OCI-LY7 (cell line): ENCODE measurements at regions of chr10 and their contacts with region 1.

Region 1: GRCh38 chr10:63157845-63158624 is 24.9 kb downstream of the NRBF2 start:
- DNase-seq: peak; percentile 87
- H3K4me3 ChIP-seq: no peak overlapping the region
- H3K27ac ChIP-seq: no peak overlapping the region
- H3K4me1 ChIP-seq: no peaks in the 10 kb centered on the region
- CTCF ChIP-seq: peak; percentile 96

Region 2: DNA sequence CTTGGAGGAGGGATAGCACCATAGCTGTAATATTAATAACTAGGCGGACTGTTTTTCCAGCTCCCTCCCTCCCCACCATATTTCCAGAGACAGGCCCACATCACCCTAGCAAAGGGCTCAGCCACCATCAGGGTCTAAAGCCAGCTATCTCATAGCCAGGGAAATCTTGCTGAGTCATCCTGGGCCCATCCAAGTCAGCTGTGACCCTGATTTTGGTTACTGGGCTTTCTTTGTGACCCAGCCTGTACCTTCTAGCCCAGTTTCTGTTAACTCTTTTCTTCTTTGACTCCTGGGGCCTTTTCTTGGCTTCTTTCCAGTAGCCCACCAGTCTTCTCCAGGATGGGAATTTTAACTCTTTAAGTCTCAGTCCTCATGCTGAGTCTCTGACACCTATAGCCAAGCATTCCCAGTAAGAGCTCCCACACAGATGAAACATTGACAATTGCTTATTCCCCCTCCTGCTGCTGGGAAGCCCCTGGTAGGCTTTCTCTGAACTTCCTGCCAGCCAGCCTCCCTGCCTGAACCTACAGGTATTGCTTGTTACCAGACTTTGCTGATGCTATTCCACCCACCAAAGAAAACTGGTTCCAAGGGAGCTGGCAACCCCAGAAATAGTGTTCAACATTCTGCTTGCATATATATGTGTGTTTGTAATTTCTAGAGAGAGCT is 388.3 kb before region 1 on chr10:
- CTCF ChIA-PET with region 1: no interaction called
- POLR2A ChIA-PET with region 1: no interaction called
- intact Hi-C with region 1: no loop called
- DNase-seq: no peak
- H3K4me3 ChIP-seq: no peak overlapping the region
- H3K27ac ChIP-seq: no peak overlapping the region
- H3K4me1 ChIP-seq: peaks cover 16% of the 10 kb centered on the region
- CTCF ChIP-seq: no peak

Region 3: DNA sequence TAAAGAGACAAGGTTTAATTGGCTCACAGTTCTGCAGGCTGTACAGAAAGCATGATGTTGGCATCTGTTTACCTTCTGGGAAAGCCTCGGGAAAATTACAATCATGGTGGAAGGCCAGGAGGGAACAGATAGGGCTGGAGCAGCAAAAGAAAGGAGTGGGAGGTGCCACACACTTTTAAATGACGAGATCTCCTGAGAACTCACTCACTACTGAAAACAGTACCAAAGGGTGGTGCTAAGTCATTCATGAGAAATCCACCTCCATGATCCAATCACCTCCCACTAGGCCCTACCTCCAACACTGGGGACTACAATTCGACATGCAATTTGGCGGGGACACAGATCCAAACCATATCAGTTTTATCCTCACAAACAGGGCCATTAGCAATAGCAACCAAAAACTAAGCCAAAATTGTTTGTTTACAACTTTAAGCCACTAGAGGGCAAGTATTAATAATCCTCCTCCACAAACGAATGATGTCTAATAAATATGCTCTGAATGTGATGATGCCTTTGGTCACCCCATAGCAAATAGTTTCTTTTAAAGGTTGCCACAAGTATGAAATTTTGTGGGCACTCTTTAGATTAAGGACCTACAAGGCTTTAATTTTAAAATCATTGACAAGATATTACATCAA is 154.1 kb before region 1 on chr10:
- CTCF ChIA-PET with region 1: no interaction called
- POLR2A ChIA-PET with region 1: interaction called, 4 read pairs
- intact Hi-C with region 1: loop called (anchors 5 kb)
- DNase-seq: peak; percentile 10
- H3K4me3 ChIP-seq: no peak overlapping the region
- H3K27ac ChIP-seq: no peak overlapping the region
- H3K4me1 ChIP-seq: no peaks in the 10 kb centered on the region
- CTCF ChIP-seq: peak; percentile 71

Region 4: GRCh38 chr10:63083904-63084689 is 73.9 kb before region 1 on chr10:
- CTCF ChIA-PET with region 1: no interaction called
- POLR2A ChIA-PET with region 1: no interaction called
- intact Hi-C with region 1: loop called (anchors 2 kb)
- DNase-seq: peak; percentile 74
- H3K4me3 ChIP-seq: no peak overlapping the region
- H3K27ac ChIP-seq: no peak overlapping the region
- H3K4me1 ChIP-seq: no peaks in the 10 kb centered on the region
- CTCF ChIP-seq: peak; percentile 85